MCF 10A (cell line): ENCODE measurements at regions of chr6 and their contacts with region 1.

Region 1: GRCh38 chr6:6749702-6750491 is 161.4 kb downstream of the LY86 start:
- DNase-seq: peak; percentile 92
- H3K4me3 Mint-ChIP-seq: peak overlapping the region; percentile 35
- H3K27ac Mint-ChIP-seq: peak overlapping the region; percentile 54
- H3K4me1 Mint-ChIP-seq: peaks cover 34% of the 10 kb centered on the region
- H3K27me3 Mint-ChIP-seq: no peaks in the 10 kb centered on the region
- CTCF ChIP-seq: no peak

Region 2: GRCh38 chr6:6771224-6771945 is 21.5 kb after region 1 on chr6:
- CTCF ChIA-PET with region 1: interaction called, 4 read pairs
- POLR2A ChIA-PET with region 1: interaction called, 12 read pairs
- intact Hi-C with region 1: no loop called
- DNase-seq: peak; percentile 65
- H3K4me3 Mint-ChIP-seq: no peak overlapping the region
- H3K27ac Mint-ChIP-seq: no peak overlapping the region
- H3K4me1 Mint-ChIP-seq: no peaks in the 10 kb centered on the region
- H3K27me3 Mint-ChIP-seq: no peaks in the 10 kb centered on the region
- CTCF ChIP-seq: no peak

Region 3: DNA sequence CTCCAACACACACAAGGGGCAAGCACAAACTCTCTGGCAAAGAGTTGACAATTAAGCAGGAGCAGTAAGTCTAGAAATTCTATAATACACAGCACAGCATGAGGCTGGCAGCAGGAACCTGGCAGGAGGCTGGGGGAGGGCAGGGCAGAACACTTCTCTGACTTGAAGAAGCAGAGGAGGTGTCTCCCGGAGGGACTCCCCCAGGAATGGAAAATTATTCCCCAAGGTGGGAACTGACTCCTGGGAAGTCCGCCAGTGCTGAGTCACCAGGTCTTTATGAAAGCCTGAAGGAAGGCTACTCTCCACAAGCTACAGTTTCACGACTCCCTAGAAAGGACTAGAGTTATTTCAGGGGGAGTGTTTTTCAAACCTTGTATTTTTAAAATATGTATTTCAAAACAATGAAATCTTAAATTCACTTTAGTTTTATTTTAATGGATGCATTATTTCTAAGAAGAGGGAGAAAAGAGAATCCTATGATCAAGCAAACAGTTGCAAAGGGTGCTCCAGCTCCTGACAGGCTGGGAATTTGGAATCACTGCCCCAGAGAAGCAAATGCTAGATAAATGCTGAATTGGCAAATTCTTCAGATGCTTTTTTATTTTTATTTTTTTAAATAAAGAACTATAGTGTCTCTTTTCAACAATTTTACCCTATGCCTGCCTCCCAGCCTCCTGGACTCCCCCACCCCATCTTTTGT is 31.4 kb after region 1 on chr6:
- CTCF ChIA-PET with region 1: interaction called, 5 read pairs
- POLR2A ChIA-PET with region 1: interaction called, 21 read pairs
- intact Hi-C with region 1: no loop called
- DNase-seq: peak; percentile 95
- H3K4me3 Mint-ChIP-seq: peak overlapping the region; percentile 36
- H3K27ac Mint-ChIP-seq: no peak overlapping the region
- H3K4me1 Mint-ChIP-seq: peaks cover 23% of the 10 kb centered on the region
- H3K27me3 Mint-ChIP-seq: no peaks in the 10 kb centered on the region
- CTCF ChIP-seq: no peak